Left cardiac atrium (tissue), 4 donors: ENCODE measurements at regions of chr4 and their contacts with region 1.

Region 1: DNA sequence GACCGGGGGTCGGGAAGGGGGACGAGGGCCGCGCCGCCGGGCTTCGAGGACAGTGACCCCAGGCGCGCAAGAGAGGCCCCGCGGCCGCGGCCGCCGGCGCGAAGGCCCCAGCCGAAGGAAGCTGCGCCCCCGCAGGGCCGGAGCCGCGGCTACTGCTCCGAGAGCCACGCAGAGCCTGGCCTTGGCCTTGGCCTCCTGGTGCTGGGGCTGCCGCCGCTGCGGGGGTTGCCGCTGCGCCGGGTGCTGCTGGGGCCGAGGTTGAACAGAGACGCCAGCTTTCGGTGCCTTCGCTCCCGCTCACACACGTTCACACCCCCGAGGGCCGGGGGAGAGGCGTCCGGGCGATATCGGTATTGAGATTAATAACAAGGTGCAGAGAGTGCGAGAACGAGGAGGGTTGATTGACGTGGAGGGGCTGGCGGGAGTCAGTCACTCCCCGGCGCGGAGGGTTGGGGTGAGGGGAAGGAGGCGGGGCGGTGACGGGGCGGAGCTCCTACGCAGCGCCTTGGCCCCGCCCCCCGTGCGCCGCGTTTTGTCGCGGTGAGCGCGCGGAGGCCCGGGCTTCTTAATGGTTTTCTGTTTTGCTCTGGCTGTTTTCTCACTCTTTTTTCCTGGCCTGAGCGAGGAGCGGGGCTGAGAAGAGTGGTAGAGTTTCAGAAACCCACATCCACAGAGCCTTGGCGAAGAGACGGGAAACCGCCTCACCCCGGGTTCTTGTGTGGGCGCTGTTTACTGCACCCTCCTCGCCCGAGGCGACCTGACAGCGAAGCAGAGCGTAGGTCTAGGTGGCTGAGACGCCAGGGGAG is 878 bp upstream of the CNOT6L start:
- DNase-seq: peak; percentile 93
- ATAC-seq: peak; percentile 90 to 93

Region 2: GRCh38 chr4:77586951-77587383 is 233.1 kb before region 1 on chr4:
- intact Hi-C with region 1: no loop called
- DNase-seq: no peak
- ATAC-seq: peak; percentile 38 to 54

Region 3: GRCh38 chr4:77861495-77861894 is 41.4 kb after region 1 on chr4:
- intact Hi-C with region 1: loop called in 1 of 2 experiments (anchors 2 kb)
- DNase-seq: no peak
- ATAC-seq: no peak

Region 4: GRCh38 chr4:77911842-77912450 is 91.9 kb after region 1 on chr4:
- intact Hi-C with region 1: no loop called
- DNase-seq: no peak
- ATAC-seq: no peak